H1 (cell line): ENCODE measurements at regions of chr16 and their contacts with region 1.

Region 1: DNA sequence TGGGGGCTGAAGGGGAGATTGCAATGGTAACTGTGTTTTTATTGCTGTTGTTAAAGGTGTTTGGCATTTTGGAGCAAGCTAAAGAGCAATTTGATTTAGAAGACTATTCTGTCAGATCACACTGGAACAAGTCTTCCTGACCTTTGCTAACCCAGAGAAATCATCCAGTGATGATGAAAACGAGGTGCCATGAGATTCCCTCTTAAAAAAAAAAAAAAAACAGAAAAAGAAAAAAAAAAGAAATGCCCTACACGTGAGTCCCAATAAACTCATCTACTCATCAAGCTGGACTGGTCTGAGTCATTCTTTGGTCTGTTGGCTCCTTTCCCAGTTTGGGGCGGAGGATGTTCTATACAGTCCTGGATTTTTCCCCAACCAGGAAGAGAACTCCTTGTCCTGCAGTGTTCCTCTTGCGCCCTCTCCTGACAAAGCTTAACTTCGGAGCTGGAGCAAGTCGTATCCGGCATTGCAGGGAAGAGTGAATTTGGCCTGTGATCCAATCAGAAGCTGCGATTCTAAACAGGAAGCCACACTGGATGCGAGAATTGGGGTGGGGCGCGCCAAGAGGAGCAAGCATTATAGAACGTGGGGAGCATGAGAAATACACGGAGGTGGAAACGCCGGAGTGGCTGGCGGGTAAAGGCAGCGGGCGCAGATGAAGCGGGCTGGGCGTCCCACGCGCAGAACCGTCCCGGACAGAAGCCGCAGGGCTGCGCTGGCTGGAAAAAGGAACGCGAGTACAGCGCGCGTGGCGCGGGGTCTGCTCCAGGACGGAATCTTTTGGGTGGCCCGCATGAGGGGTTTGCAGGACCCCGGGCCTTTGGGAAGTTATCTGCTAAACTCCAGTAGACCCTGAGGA is 22.4 kb upstream of the CRYM start:
- DNase-seq: peak; percentile 82 to 83
- H3K4me3 ChIP-seq: peak overlapping the region; percentile 34 to 74 (median 68)
- H3K27ac ChIP-seq: no peak overlapping the region
- H3K4me1 ChIP-seq: peaks cover 0 to 3% (median 2%) of the 10 kb centered on the region in 4 experiments; a peak in 4 of 7 replicates
- H3K27me3 ChIP-seq: peaks cover 8 to 38% (median 25%) of the 10 kb centered on the region in 4 experiments
- CTCF ChIP-seq: peak; percentile 74 to 98 (median 92)
- EP300 ChIP-seq: no peak
- POLR2A ChIP-seq: no peak
- RAD21 ChIP-seq: peak; percentile 96

Region 2: DNA sequence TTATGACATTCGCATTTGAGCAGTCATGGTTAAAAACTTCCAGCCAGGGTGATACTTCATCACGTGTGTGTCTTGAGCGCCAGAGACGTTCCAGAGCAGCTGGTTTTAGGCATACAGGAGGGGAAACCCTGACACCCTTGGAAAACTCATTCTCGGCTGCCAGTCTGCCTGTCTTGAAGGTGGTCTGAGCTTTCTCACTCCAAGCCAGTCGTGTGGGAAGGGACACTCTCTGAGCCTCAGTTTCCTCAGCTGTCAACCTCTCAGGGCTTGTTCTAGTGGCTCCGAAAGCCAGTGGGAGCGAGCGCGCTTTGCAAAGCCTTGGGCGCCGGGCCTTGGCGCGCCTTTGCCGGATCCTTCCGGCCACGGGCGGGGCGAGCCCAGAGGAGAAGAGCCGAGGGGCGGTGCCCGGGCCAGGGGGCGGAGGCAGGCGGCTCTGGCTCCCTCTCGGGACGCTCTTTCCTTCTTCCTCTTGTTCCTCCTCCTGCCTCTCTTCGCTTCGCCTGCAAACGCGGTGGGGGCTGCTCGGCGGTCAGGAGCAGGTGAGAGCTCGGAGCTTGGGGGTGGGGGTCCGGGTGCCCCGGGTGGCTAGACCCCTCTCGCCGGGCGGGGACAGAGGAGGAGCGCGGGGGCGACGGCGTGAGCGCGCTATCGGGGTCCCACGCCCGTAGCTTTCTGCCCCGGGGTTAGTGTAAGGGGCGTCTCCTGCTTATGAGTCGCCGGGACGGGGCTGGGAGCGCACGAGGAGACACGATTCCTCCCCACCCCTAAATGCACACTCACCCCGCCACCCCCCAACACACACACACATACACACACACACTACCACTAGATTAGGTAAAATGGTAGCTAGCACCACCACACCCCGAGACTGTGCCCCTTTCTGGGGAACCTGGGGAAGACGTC is 142.1 kb before region 1 on chr16 and contains the start of gene LDAF1:
- CTCF ChIA-PET with region 1: interaction called, 42 read pairs
- POLR2A ChIA-PET with region 1: interaction called, 9 read pairs
- DNase-seq: peak in 1 of 2 experiments; percentile 93
- H3K4me3 ChIP-seq: peak within 1 kb of the TSS; percentile 57 to 86 (median 74)
- H3K27ac ChIP-seq: peak within 1 kb of the TSS; percentile 25; the same call in 1 of the 2 replicates
- H3K4me1 ChIP-seq: peaks cover 0 to 10% (median 5%) of the 10 kb centered on the region in 4 experiments; a peak in 4 of 7 replicates
- H3K27me3 ChIP-seq: peaks cover 0 to 7% (median 1%) of the 10 kb centered on the region in 4 experiments; a peak in 3 of 7 replicates
- CTCF ChIP-seq: no peak
- EP300 ChIP-seq: no peak
- POLR2A ChIP-seq: peak in 1 of 2 experiments; percentile 49; a peak in 2 of 3 replicates
- RAD21 ChIP-seq: peak in 1 of 2 experiments; percentile 4; a peak in 1 of 4 replicates
- total RNA-seq, gene LDAF1: 29.1 and 32.4 TPM in 2 replicates

Region 3: GRCh38 chr16:21184834-21185233 is 115.7 kb before region 1 on chr16:
- CTCF ChIA-PET with region 1: interaction called, 65 read pairs
- POLR2A ChIA-PET with region 1: no interaction called
- DNase-seq: no peak
- H3K4me3 ChIP-seq: no peak overlapping the region
- H3K27ac ChIP-seq: no peak overlapping the region
- H3K4me1 ChIP-seq: no peaks in the 10 kb centered on the region
- H3K27me3 ChIP-seq: peaks cover 0 to 2% (median 0%) of the 10 kb centered on the region in 4 experiments; a peak in 2 of 7 replicates
- CTCF ChIP-seq: no peak
- EP300 ChIP-seq: no peak
- POLR2A ChIP-seq: no peak
- RAD21 ChIP-seq: no peak

Region 4: GRCh38 chr16:21190599-21190998 is 109.9 kb before region 1 on chr16:
- CTCF ChIA-PET with region 1: interaction called, 65 read pairs
- POLR2A ChIA-PET with region 1: no interaction called
- DNase-seq: no peak
- H3K4me3 ChIP-seq: no peak overlapping the region
- H3K27ac ChIP-seq: no peak overlapping the region
- H3K4me1 ChIP-seq: no peaks in the 10 kb centered on the region
- H3K27me3 ChIP-seq: peaks cover 0 to 2% (median 0%) of the 10 kb centered on the region in 4 experiments; a peak in 2 of 7 replicates
- CTCF ChIP-seq: no peak
- EP300 ChIP-seq: no peak
- POLR2A ChIP-seq: no peak
- RAD21 ChIP-seq: no peak

Region 5: DNA sequence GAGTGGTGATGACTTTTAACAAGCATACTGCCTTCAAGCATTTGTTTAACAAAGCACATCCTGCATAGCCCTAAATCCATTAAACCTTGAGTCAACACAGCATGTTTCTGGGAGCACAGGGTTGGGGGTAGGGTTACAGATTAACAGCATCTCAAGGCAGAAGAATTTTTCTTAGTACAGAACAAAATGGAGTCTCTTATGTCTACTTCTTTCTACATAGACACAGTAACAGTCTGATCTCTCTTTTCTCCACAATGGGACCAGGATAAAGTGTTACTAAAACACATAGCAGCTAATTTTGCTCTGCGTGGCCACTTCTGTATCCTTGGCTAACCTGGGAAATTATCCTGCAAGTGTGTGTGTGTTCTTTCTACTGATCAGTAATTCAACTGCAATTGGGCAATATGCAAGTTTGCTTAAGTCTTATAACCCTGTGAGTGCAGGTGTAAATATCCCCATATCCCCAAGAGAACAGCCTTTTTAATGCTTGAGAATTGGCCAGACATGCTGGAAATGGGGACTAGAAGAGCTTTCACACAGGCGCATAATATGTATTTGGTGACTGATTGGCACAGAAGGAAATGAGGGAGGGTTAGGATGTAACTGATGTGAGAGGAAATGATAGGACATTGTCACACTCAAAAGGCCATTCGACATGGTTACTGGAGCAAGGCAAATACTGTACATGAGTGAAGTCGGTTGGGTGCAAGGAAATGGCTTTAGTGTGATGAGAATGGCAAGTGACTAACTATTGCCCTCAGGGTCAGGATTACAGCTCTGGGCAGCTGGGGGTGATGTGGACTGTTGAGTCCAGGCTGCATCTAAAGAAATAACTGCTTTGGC is 77.8 kb before region 1 on chr16:
- CTCF ChIA-PET with region 1: no interaction called
- POLR2A ChIA-PET with region 1: no interaction called
- DNase-seq: no peak
- H3K4me3 ChIP-seq: peak overlapping the region in 1 of 4 experiments; percentile 4; a peak in 1 of 8 replicates
- H3K27ac ChIP-seq: no peak overlapping the region
- H3K4me1 ChIP-seq: peaks cover 3 to 15% (median 12%) of the 10 kb centered on the region in 4 experiments; a peak in 6 of 7 replicates
- H3K27me3 ChIP-seq: no peaks in the 10 kb centered on the region
- CTCF ChIP-seq: no peak
- EP300 ChIP-seq: no peak
- POLR2A ChIP-seq: no peak
- RAD21 ChIP-seq: no peak

Region 6: DNA sequence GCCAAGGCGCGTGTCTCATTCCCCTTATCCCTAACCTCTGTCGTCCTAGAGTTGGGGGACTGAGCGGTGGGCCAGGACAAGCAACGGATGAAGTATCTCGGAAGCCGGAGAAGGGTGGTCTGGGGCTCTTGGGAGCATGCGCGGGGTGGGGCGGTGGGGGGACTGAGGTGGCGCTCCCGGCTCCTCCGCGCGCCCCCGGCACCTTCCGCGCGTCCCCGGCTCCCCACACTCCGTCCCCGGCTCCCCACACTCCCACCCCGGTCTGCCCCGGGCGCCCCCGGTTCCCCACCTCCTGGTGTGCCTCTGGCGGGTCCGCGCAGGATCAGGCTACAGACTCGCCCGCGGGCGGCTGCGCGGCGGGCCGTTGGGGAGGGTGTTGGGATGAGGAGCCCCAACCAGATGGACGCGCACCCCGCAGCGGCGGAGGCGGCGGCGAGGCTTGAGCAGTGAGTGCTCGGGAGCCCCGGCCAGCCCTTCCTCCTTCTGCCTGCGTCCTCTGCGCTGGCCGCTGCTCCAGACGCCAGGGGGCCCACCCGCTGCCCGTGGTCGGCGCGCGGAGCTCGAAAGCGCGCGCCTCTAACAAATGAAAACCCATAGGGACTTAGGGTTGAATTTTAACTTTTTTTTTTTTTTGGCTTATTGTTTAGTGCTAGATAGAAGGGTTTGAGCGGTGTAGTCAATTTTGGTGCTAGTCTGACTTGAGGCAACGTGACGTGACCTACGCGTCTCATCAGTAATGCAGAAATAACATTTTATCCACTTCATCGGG is 16.8 kb before region 1 on chr16:
- CTCF ChIA-PET with region 1: interaction called, 29 read pairs
- POLR2A ChIA-PET with region 1: interaction called, 7 read pairs
- DNase-seq: peak; percentile 41 to 87
- H3K4me3 ChIP-seq: peak overlapping the region; percentile 53 to 75 (median 67)
- H3K27ac ChIP-seq: no peak overlapping the region
- H3K4me1 ChIP-seq: peaks cover 0 to 7% (median 6%) of the 10 kb centered on the region in 4 experiments; a peak in 5 of 7 replicates
- H3K27me3 ChIP-seq: peaks cover 0 to 5% (median 0%) of the 10 kb centered on the region in 4 experiments; a peak in 3 of 7 replicates
- CTCF ChIP-seq: peak; percentile 12 to 38 (median 34)
- EP300 ChIP-seq: no peak
- POLR2A ChIP-seq: peak in 1 of 2 experiments; percentile 28; a peak in 1 of 3 replicates
- RAD21 ChIP-seq: peak; percentile 8 to 34; a peak in 1 of 4 replicates